GM10248 (cell line): ENCODE measurements at regions of chrX and their contacts with region 1.

Region 1: GRCh38 chrX:70970482-70970995 is 39.6 kb upstream of the SLC7A3 start:
- DNase-seq: peak; percentile 15
- CTCF ChIP-seq: peak; percentile 14

Region 2: DNA sequence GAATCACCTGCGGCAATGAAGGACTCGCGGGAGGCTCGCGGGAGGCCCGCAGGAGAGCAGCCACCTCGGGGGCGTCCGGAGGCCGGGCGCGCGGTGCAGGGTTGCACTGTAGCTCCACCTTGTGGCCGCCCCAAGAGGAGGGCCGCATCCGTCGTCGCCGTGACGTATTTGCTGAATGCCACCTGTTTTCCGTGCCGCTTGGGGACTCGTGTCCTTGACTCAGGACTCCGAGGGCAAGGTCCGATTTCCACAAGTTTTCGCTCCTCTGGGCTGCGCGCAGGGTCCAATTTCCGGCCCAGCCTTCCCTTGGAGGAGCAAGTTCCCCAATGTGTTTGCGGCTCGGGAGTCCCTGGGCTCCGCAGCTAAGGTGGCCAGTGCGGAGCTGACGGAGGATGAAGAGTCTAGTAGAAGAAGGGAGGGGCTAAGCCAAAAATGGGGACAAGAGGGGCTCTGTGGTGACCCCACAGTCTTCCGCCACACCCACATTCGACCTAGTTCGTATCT is 536.6 kb before region 1 on chrX:
- CTCF ChIA-PET with region 1: no interaction called
- POLR2A ChIA-PET with region 1: no interaction called
- DNase-seq: peak; percentile 79
- CTCF ChIP-seq: peak; percentile 62

Region 3: DNA sequence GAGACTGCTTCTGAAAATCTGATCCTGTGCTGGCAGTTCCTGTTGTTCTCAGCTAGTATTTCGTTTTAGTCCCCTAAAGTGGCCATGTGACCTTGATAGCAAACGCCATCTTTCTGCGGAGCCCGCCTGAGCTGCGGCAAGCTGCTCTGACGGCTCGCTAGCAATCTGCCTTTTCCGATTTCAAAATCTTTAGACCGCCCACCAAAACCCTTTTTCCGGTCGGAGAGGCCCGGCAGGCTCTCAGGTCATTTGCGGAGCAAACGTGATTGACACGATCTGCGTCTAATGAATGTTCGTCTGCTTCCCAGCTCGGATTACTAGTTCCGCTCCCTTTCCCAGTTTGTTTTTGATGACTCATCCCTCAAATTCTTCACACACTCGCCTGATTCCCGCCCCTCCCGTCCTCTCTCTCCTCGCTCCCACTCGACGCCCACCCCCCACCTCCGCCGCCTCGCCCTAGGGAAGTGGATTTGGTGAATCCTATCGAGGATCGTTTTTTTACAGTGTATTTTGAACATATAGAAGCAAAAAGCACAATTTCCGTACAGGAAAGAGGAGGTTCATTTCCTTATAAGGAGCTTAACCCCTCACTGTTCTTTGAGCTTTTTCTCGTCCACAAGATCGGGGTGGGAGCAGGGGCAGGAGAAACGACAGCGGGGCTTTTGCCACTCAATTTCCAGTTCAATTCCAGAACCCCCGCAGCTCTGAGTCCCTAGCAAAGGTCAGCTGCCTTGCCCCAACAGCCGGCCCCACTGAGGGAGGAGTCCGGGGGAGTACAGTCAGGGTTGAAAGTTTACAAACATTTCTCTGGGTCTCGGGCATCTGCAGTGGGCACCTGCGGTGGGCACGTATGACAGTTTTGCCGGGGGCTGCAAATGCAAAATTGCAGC is 211.6 kb after region 1 on chrX:
- CTCF ChIA-PET with region 1: interaction called, 13 read pairs
- POLR2A ChIA-PET with region 1: no interaction called
- DNase-seq: peak; percentile 76
- CTCF ChIP-seq: no peak